AG04449 (cell line): ENCODE measurements at regions of chr17 and their contacts with region 1.

Region 1: GRCh38 chr17:60036796-60037612 is 41.7 kb downstream of the HEATR6 start:
- DNase-seq: no peak
- H3K4me3 ChIP-seq: no peak overlapping the region
- CTCF ChIP-seq: peak; percentile 97

Region 2: DNA sequence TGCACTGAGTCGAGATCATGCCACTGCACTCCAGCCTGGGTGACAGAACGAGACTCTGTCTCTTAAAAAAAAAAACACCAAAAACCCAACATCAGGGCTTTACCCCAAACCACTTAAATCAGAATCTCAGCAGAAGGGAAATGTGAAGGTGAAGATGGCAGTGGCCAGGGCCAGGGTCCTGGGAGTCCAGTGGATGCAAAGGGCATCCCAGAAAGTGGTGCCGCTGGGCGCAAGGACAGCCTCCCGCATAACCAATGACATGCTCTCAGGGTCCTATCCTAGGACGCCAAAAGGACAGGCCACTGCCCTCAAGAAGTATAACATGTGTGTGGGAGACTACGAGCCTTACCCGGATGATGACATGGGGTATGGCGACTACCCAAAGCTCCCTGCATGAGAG is 152.1 kb before region 1 on chr17:
- CTCF ChIA-PET with region 1: no interaction called
- POLR2A ChIA-PET with region 1: no interaction called
- DNase-seq: no peak
- H3K4me3 ChIP-seq: no peak overlapping the region
- CTCF ChIP-seq: no peak

Region 3: GRCh38 chr17:60049936-60050335 is 12.9 kb after region 1 on chr17:
- CTCF ChIA-PET with region 1: interaction called, 85 read pairs
- POLR2A ChIA-PET with region 1: no interaction called
- DNase-seq: no peak
- H3K4me3 ChIP-seq: no peak overlapping the region
- CTCF ChIP-seq: no peak

Region 4: DNA sequence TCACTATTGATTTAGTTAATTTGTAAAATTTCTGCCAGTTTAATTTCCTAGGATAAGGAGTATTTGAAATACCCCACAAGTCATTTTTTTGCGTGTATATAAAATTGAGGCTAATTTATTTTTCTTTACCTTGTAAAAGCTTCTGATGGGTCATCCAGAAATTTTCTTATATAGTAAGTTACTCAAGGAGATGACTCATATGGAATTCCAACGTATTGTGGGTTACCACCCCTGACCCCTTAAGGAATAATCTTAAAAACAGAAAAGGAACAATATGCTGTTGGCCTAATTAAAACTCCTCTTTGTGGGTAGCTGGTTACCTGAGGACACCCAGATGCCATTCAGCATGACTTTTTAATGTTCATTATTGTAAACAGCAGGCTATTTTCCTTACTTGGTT is 28.1 kb after region 1 on chr17:
- CTCF ChIA-PET with region 1: interaction called, 10 read pairs
- POLR2A ChIA-PET with region 1: no interaction called
- DNase-seq: no peak
- H3K4me3 ChIP-seq: no peak overlapping the region
- CTCF ChIP-seq: no peak